HepG2 (cell line): ENCODE measurements at regions of chr3 and their contacts with region 1.

Region 1: DNA sequence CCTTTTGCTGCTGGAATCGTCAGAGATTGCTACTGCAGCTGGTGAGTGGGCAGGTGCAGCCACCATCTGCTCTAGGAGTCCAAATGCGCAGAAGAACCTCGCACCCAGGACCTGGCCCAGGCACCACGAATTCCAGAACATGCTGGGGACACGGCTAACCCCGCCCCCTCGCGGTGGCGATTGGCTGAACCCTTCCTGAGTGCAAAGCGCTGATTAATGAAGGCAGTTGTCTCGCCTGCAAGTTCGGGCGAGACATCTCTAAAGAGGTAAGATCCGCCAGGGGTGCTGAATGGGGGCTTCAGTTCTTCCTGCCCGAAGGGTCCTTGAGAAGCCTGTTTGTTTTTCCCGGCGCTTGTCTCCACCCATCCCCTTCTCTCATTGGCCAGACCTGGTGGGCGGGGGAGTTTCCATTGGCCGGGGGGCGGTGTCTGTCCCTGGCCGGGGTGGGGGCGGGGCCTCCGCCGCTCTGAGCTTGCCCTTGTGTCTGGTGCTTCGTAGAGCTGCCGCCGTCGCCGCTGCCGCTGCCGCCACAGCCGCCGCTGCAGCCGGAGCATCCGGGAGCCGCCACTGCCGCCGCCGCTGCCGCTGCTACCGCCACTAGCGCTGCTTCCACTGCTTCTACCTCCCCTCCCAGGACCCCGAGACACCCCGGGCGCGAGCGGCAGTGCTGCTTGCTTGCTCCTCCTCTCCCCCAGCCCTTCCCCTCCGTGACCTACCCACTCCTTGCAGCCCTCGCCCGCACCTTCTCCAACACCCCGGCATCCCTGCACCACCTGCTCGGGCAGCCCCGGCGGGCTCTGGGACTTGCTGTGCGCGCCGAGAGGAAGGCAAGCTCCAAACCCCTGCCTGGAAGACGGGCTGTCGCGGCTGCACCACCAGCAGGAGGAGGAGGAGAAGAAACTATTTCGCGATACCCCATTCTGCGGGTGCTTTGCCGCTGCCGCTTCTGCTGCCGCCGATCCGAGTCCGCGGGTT is at the start of gene CADM2:
- DNase-seq: peak; percentile 76
- ATAC-seq: peak; percentile 99
- H3K4me3 ChIP-seq: peak within 1 kb of the TSS; percentile 54 to 74 (median 65); a peak in 5 of 6 replicates
- H3K27ac ChIP-seq: no peak within 1 kb of the TSS
- H3K4me1 ChIP-seq: peaks cover 14% of the 10 kb centered on the region
- H3K27me3 ChIP-seq: peaks cover 1 to 24% of the 10 kb centered on the region in 2 experiments; a peak in 3 of 5 replicates
- CTCF ChIP-seq: peak; percentile 42
- EP300 ChIP-seq: no peak
- POLR2A ChIP-seq: no peak
- RAD21 ChIP-seq: no peak
- total RNA-seq, gene CADM2: not detected in 2 replicates

Region 2: GRCh38 chr3:85007195-85008094 is 48.7 kb after region 1 on chr3:
- CTCF ChIA-PET with region 1: no interaction called
- POLR2A ChIA-PET with region 1: no interaction called
- in situ Hi-C with region 1: no loop called
- intact Hi-C with region 1: loop called (anchors 2 kb)
- DNase-seq: peak; percentile 90
- ATAC-seq: peak; percentile 97
- H3K4me3 ChIP-seq: no peak overlapping the region
- H3K27ac ChIP-seq: peak overlapping the region; percentile 76
- H3K4me1 ChIP-seq: peaks cover 27% of the 10 kb centered on the region
- H3K27me3 ChIP-seq: no peaks in the 10 kb centered on the region
- CTCF ChIP-seq: no peak
- EP300 ChIP-seq: peak; percentile 95 to 98
- POLR2A ChIP-seq: no peak
- RAD21 ChIP-seq: no peak

Region 3: GRCh38 chr3:85050821-85051220 is 92.0 kb after region 1 on chr3:
- CTCF ChIA-PET with region 1: no interaction called
- POLR2A ChIA-PET with region 1: no interaction called
- in situ Hi-C with region 1: no loop called
- intact Hi-C with region 1: no loop called
- DNase-seq: no peak
- ATAC-seq: no peak
- H3K4me3 ChIP-seq: no peak overlapping the region
- H3K27ac ChIP-seq: no peak overlapping the region
- H3K4me1 ChIP-seq: no peaks in the 10 kb centered on the region
- H3K27me3 ChIP-seq: no peaks in the 10 kb centered on the region
- CTCF ChIP-seq: no peak
- EP300 ChIP-seq: no peak
- POLR2A ChIP-seq: no peak
- RAD21 ChIP-seq: no peak

Region 4: GRCh38 chr3:85342915-85343314 is 384.1 kb after region 1 on chr3:
- CTCF ChIA-PET with region 1: no interaction called
- POLR2A ChIA-PET with region 1: no interaction called
- in situ Hi-C with region 1: no loop called
- intact Hi-C with region 1: no loop called
- DNase-seq: peak; percentile 3
- ATAC-seq: peak; percentile 86
- H3K4me3 ChIP-seq: no peak overlapping the region
- H3K27ac ChIP-seq: no peak overlapping the region
- H3K4me1 ChIP-seq: no peaks in the 10 kb centered on the region
- H3K27me3 ChIP-seq: no peaks in the 10 kb centered on the region
- CTCF ChIP-seq: peak; percentile 66
- EP300 ChIP-seq: no peak
- POLR2A ChIP-seq: no peak
- RAD21 ChIP-seq: no peak